ENCODE measurements at regions of chr6 and their contacts with region 1.

Region 1: DNA sequence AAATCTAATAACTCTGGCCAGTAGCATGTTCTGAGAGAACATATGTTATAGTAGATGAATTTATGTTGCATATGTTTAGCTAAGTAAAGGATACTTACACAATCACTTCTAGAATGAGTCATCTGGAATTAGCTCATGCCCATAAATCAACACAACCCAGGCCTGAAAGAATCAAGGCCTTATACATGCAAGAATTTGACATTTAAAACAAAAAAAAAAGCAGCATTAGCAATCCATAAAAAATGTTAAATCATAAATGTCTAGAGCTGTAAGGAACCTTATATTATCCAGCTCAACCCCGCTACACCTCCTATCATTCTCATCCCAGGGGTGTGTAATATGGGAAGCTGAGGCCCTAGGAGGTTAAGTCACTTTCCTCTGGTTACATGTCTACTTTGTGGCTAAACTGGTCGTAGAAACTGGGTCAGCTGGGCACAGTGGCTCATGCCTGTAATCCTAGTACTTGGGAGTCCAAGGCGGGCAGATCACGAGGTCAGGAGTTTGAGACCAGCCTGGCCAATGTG is 105.2 kb upstream of the CARMIL1 start:
- DNase-seq: no peak
- H3K4me3 ChIP-seq: no peak overlapping the region
- H3K27ac ChIP-seq: no peak overlapping the region
- H3K4me1 ChIP-seq: no peaks in the 10 kb centered on the region
- CTCF ChIP-seq: no peak

Region 2: GRCh38 chr6:25085756-25086155 is 88.3 kb before region 1 on chr6:
- CTCF ChIA-PET with region 1: no interaction called
- POLR2A ChIA-PET with region 1: no interaction called
- intact Hi-C with region 1: loop called (anchors 10 kb)
- DNase-seq: peak; percentile 16
- H3K4me3 ChIP-seq: no peak overlapping the region
- H3K27ac ChIP-seq: no peak overlapping the region
- H3K4me1 ChIP-seq: no peaks in the 10 kb centered on the region
- CTCF ChIP-seq: no peak

Measured in OCI-LY7 (cell line).